ENCODE measurements at regions of chr1 and their contacts with region 1.

Region 1: GRCh38 chr1:213374369-213374768 is 323.3 kb downstream of the RPS6KC1 start:
- DNase-seq: peak; percentile 13
- H3K4me3 Mint-ChIP-seq: no peak overlapping the region
- H3K27ac Mint-ChIP-seq: no peak overlapping the region
- H3K4me1 Mint-ChIP-seq: no peaks in the 10 kb centered on the region
- H3K27me3 Mint-ChIP-seq: peaks cover 7% of the 10 kb centered on the region

Region 2: DNA sequence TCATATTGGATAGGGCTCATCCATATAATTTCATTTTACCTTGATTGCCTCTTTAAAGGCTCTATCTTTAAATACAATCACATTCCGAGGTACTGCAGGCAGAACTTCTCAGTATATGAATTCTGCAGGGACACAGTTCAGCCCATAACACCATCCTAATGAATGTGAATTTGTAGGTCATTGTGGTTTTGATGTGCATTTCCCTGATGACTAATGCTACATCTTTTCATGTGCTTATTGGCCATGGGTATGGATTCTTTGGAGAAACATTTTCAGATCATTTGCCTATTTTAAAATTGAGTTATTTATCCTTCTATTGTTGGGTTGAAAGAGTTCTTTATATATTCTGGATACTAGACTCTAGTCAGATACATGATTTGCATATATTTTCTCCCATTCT is 332.9 kb before region 1 on chr1:
- intact Hi-C with region 1: no loop called
- DNase-seq: no peak
- H3K4me3 Mint-ChIP-seq: no peak overlapping the region
- H3K27ac Mint-ChIP-seq: no peak overlapping the region
- H3K4me1 Mint-ChIP-seq: peaks cover 7% of the 10 kb centered on the region
- H3K27me3 Mint-ChIP-seq: peaks cover 19% of the 10 kb centered on the region

Region 3: GRCh38 chr1:213122514-213122929 is 251.8 kb before region 1 on chr1:
- intact Hi-C with region 1: loop called (anchors 10 kb)
- DNase-seq: no peak
- H3K4me3 Mint-ChIP-seq: no peak overlapping the region
- H3K27ac Mint-ChIP-seq: no peak overlapping the region
- H3K4me1 Mint-ChIP-seq: peaks cover 11% of the 10 kb centered on the region
- H3K27me3 Mint-ChIP-seq: no peaks in the 10 kb centered on the region

Region 4: GRCh38 chr1:213244664-213245091 is 129.7 kb before region 1 on chr1:
- intact Hi-C with region 1: loop called (anchors 1 kb)
- DNase-seq: no peak
- H3K4me3 Mint-ChIP-seq: no peak overlapping the region
- H3K27ac Mint-ChIP-seq: no peak overlapping the region
- H3K4me1 Mint-ChIP-seq: no peaks in the 10 kb centered on the region
- H3K27me3 Mint-ChIP-seq: no peaks in the 10 kb centered on the region

Measured in activated T-helper 1 cell treated with anti-CD3 and anti-CD28 coated beads, Interleukin-12 subunit alpha, Interleukin-12 subunit beta, Interleukin-2, Interleukin-4 antibody, amounts not matched to agents 30 ng/mL and 10 ng/mL and 1 ng/mL, durations not matched to agents 14 hours and 24 hours and 36 hours (primary cell).